Natural killer cell (primary cell): ENCODE measurements at regions of chr22 and their contacts with region 1.

Region 1: DNA sequence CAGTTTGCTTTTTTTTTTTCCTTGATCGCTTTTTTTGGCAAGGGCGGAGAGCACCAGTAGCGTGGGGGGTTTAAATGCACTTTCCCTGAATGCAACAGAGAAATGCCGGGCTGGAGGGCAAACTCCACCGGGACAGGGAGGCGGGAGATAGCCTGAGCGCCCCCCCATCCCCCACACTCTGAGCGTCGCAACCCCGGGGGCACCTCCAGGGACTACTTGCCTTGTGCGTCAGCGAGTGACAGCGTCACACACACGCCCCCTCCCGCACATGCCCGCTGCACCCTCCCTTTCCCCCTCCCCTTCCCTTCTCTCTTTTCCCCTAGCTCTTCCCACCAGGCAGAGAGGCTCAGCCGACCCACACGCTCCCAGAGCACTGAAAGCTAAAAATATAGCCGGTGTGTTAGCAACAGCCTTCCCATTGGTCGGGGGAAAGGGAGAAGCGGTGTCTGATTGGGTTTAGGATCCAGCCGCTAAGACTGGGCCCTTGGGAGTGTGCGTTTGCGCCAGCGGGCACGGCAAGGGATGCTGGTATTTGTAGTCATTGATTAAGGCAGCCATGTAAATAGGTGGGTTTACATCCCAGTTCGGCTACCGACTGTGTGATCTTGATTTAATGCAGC is 1.7 kb upstream of the TOB2 start:
- DNase-seq: peak; percentile 81 to 96
- ATAC-seq: peak; percentile 62 to 81 (median 70)
- H3K4me3 ChIP-seq: peak overlapping the region; percentile 91
- H3K4me3 Mint-ChIP-seq: peak overlapping the region; percentile 93
- H3K27ac ChIP-seq: peak overlapping the region; percentile 100
- H3K27ac Mint-ChIP-seq: peak overlapping the region; percentile 93 to 99
- H3K4me1 ChIP-seq: peaks cover 31% of the 10 kb centered on the region
- H3K4me1 Mint-ChIP-seq: peaks cover 30 to 41% of the 10 kb centered on the region in 2 donors
- H3K27me3 ChIP-seq: no peaks in the 10 kb centered on the region
- H3K27me3 Mint-ChIP-seq: no peaks in the 10 kb centered on the region
- CTCF ChIP-seq: no peak

Region 2: DNA sequence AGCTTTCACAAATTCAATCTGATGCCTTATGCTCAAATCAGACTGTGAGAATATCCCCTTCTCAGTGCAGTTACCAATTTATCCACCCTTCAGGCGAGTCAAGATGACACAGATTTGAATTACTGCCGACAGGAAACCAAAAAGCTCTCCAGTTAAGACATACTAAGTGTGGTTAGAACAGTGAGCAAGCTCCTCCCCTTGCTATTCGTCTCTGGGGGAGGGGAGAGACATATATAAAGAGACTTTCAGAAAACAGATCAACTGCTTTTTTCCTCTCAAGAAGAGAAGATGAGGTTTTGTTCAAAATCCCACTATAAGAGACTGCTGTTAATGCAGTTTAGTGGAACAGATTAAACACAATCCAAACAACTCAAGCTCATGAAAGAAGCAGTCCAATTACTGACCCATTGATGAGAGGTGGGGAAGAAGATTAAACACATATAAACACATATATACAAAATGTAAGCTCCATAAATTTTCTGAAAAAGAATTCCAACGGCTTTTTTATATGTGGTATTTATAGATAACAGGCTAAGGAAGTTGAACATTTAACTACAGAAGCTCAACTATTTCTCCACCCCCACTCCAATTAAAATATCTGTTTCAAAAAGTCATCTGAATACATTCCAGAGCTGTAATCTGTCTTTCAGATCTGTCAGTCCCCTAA is 914.5 kb before region 1 on chr22:
- intact Hi-C with region 1: no loop called
- DNase-seq: peak in 1 of 2 donors; percentile 85
- ATAC-seq: peak; percentile 96 to 100 (median 99)
- H3K4me3 ChIP-seq: peak overlapping the region; percentile 6
- H3K4me3 Mint-ChIP-seq: peak overlapping the region; percentile 75
- H3K27ac ChIP-seq: peak overlapping the region; percentile 54
- H3K27ac Mint-ChIP-seq: peak overlapping the region; percentile 87 to 88
- H3K4me1 ChIP-seq: peaks cover 7% of the 10 kb centered on the region
- H3K4me1 Mint-ChIP-seq: peaks cover 37 to 45% of the 10 kb centered on the region in 2 donors
- H3K27me3 ChIP-seq: no peaks in the 10 kb centered on the region
- H3K27me3 Mint-ChIP-seq: no peaks in the 10 kb centered on the region
- CTCF ChIP-seq: no peak

Region 3: DNA sequence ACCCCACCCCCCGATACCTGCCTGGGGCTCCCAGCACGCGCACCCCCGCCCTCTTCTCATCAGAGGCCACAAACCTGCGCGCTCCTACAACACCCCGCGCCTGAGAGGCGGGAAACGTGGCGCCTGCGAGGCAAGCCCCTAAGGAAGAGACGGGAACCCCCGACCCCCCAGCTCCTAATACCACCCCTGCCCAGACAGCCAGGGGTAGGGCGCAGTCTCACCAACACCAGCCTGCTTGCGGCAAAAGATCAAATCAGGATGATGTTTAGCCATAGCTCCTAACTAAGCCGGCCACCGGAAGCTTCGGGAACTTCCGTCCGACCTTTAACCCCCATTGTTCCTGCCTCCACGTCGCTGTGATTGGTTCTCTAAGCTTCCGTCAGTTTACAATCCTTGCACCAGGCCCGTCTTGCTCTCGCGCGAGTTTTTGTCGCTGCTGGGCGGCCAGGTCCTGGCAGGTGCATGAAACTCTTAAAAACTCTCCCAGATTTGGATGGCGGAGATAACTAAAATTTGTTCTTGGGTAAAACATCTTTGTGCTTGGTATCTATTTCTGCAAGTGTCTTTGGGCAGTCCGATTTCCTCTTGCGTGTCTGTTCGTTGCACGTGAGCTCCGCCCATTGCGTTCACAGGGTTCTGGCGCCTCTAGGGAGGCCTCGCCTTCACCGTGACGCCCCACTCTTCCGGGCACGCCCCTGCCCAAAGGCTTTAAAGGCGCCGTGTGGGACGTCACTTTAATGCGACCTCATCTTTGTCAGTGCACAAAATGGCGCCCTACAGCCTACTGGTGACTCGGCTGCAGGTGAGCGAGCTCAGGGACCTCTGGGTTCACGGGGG is 20.3 kb after region 1 on chr22 and contains the starts of genes ACO2 and PHF5A:
- intact Hi-C with region 1: loop called (anchors 1 kb)
- DNase-seq: peak; percentile 99
- ATAC-seq: peak; percentile 91 to 97 (median 91)
- H3K4me3 ChIP-seq: peak within 1 kb of the TSS; percentile 85
- H3K4me3 Mint-ChIP-seq: peak within 1 kb of the TSS; percentile 87
- H3K27ac ChIP-seq: peak within 1 kb of the TSS; percentile 91
- H3K27ac Mint-ChIP-seq: peak within 1 kb of the TSS; percentile 97 to 99
- H3K4me1 ChIP-seq: peaks cover 20% of the 10 kb centered on the region
- H3K4me1 Mint-ChIP-seq: peaks cover 40 to 41% of the 10 kb centered on the region in 2 donors
- H3K27me3 ChIP-seq: no peaks in the 10 kb centered on the region
- H3K27me3 Mint-ChIP-seq: no peaks in the 10 kb centered on the region
- CTCF ChIP-seq: no peak
- total RNA-seq, gene ACO2: 77.9 to 99.8 (median 89.5) TPM
- total RNA-seq, gene PHF5A: 31.8 to 41.8 (median 37.6) TPM